ENCODE measurements at regions of chr20 and their contacts with region 1.

Region 1: DNA sequence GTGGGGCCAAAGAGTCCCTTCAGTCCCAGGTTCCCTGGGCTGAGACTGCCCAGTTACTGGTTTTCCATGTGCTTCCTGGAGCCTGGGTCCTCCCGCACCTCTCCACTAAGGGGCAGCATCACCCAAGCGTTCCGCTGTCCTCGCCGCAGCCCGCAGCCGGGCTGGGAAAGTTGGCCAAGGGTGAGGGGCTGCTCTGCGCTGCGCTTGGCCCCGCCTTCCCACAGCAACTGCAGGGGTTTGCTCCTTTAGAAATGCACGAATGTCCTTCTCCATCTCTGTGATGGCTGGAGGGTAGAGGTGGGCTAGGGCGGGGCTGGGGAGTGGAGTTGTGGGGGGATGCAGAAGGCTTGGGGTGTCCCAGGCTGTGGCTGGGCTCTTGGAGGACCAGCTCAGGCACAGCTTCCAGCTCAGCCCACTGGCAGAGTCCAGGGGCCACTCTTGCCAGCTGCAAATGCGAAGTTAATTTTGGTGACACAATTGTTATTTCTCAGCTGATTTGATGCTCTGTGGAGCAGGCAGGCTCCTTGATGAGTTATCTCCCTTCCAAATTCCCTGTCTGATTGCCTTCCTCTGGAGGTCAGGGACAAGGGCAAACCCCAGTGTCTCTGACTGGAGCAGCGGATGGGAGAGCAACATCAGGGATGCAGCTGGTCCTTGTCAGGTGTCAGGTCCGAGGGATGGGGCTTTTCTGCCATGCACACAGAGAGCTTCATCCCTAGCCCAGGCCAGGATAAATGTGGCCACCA is 63.2 kb downstream of the NOL4L start:
- DNase-seq: peak; percentile 85
- H3K4me3 ChIP-seq: peak overlapping the region in 1 of 2 experiments; percentile 58; a peak in 1 of 4 replicates
- H3K27ac ChIP-seq: peak overlapping the region in 1 of 2 experiments; percentile 96; a peak in 2 of 4 replicates
- H3K4me1 ChIP-seq: peaks cover 0 to 77% of the 10 kb centered on the region in 2 experiments; a peak in 3 of 4 replicates
- H3K27me3 ChIP-seq: no peaks in the 10 kb centered on the region
- CTCF ChIP-seq: peak; percentile 84
- EP300 ChIP-seq: no peak
- RAD21 ChIP-seq: peak; percentile 98

Region 2: DNA sequence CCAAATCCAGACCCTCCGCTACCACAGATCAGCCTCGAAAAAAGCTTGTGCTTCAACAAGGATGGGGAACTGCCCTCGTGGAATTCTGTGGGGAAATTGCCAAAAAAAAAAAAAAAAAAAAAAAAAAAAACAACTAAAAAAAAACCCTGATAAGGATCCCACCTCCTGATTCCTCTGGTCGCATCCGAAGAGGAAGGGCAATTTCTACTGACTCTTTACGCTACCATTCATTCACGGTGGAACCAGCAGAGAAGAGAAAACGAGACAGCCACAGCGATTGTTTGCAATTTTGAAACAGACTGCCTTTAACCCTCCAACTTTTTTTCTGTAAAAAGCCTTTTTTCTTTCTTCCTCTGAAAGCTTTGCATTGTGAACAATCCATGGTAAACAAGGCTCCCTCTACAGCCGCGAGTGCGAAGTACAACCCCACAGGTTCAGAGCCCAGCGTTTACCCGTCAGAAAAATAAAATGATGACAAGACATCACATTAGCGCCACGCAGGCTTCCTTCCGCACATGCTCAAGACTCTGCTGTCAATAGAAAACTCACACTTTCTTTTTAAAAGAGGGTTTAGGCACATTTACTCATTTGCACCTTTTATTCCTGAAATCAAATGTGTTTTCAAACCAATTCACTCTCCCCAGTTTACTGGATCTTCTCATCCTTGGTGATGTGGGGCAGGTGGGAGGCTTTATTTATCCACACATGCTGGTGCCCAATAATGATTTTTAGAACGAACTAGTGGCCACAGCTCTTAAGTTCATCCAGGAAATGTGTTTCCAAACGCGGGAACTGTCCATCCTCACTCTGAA is 36.8 kb before region 1 on chr20:
- CTCF ChIA-PET with region 1: interaction called, 28 read pairs
- POLR2A ChIA-PET with region 1: interaction called, 6 read pairs
- DNase-seq: peak; percentile 61
- H3K4me3 ChIP-seq: peak overlapping the region; percentile 53 to 61
- H3K27ac ChIP-seq: peak overlapping the region; percentile 87 to 100
- H3K4me1 ChIP-seq: peaks cover 0 to 33% of the 10 kb centered on the region in 2 experiments; a peak in 2 of 4 replicates
- H3K27me3 ChIP-seq: no peaks in the 10 kb centered on the region
- CTCF ChIP-seq: peak; percentile 79
- EP300 ChIP-seq: no peak
- RAD21 ChIP-seq: peak; percentile 72

Region 3: DNA sequence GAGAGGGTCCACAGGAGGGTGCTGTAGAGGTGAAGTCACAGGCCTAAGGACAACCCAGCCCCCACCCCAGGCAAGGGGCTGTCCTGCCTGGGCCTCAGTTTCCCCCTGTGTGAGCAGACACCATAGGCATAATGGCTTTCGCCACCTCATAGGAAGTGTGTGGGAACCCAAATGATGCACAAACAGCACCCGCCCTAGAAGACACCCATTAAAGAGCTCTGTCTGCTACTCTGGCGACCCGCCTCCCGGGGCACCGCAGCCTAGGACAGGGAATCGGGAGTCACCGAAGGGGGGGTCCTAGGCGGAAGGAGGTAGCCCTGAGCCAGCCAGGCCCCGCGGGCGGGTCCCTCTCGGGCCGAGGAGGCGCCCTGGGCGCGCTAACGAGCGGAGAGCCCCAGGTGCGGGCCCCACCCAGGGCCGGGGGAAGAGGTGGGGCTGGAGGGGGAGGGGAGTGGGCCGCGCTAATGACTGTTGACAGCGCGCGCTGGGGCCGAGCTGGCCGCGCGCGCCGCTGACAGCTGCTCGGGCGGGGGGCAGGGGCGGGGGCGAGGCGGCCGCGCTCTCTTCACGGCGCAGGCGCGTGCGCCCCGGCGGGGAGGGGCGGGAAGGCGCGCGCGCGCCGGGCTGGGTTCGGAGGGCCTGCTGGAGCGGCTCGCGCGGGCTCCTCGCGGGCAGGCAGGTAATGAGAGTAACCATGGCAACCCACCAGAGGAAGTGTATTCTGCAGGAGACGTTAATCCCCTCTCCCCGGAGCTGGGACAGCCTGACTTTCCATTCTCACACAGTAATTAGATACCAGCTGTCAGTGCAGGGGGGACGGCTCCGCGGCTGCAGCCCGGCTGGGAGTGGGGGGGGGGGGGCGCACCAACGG is 14.2 kb after region 1 on chr20:
- CTCF ChIA-PET with region 1: interaction called, 30 read pairs
- POLR2A ChIA-PET with region 1: interaction called, 6 read pairs
- DNase-seq: peak; percentile 96
- H3K4me3 ChIP-seq: peak overlapping the region; percentile 23 to 49; a peak in 2 of 4 replicates
- H3K27ac ChIP-seq: no peak overlapping the region; a peak in 1 of 4 replicates
- H3K4me1 ChIP-seq: peaks cover 0 to 48% of the 10 kb centered on the region in 2 experiments; a peak in 1 of 4 replicates
- H3K27me3 ChIP-seq: no peaks in the 10 kb centered on the region; the same call in 1 of the 2 replicates
- CTCF ChIP-seq: no peak
- EP300 ChIP-seq: no peak
- RAD21 ChIP-seq: no peak

Region 4: GRCh38 chr20:32574296-32575226 is 52.6 kb after region 1 on chr20:
- CTCF ChIA-PET with region 1: interaction called, 29 read pairs
- POLR2A ChIA-PET with region 1: no interaction called
- DNase-seq: no peak
- H3K4me3 ChIP-seq: no peak overlapping the region
- H3K27ac ChIP-seq: peak overlapping the region in 1 of 2 experiments; percentile 37; a peak in 1 of 4 replicates
- H3K4me1 ChIP-seq: peaks cover 0 to 2% of the 10 kb centered on the region in 2 experiments; a peak in 1 of 4 replicates
- H3K27me3 ChIP-seq: no peaks in the 10 kb centered on the region
- CTCF ChIP-seq: no peak
- EP300 ChIP-seq: no peak
- RAD21 ChIP-seq: no peak

Region 5: DNA sequence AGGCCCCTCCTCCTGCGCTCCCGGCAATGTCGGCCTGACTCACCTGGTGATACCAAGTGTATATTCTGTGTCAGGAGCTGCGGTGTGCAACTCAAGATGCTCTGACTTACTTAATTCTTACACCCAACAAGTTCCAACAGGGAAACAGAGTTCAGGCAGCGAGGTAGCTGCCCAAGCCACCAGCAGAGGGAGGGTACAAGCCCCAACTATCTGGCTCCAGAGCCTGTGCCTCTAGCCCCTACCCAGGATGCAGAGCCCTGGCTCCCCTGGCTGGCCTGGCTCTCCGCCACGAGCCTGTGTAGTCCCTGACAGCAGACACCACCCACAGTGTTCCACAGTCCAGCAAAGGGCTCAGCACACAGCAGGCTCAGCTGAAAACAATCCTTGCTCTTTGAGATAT is 116.9 kb after region 1 on chr20:
- CTCF ChIA-PET with region 1: interaction called, 326 read pairs
- POLR2A ChIA-PET with region 1: no interaction called
- DNase-seq: peak; percentile 81
- H3K4me3 ChIP-seq: no peak overlapping the region
- H3K27ac ChIP-seq: peak overlapping the region in 1 of 2 experiments; percentile 35; a peak in 1 of 4 replicates
- H3K4me1 ChIP-seq: peaks cover 0 to 26% of the 10 kb centered on the region in 2 experiments; a peak in 1 of 4 replicates
- H3K27me3 ChIP-seq: 0 out of 2 replicates have a peak, but pooled peaks cover 17% of the 10 kb centered on the region
- CTCF ChIP-seq: no peak
- EP300 ChIP-seq: no peak
- RAD21 ChIP-seq: no peak

Region 6: DNA sequence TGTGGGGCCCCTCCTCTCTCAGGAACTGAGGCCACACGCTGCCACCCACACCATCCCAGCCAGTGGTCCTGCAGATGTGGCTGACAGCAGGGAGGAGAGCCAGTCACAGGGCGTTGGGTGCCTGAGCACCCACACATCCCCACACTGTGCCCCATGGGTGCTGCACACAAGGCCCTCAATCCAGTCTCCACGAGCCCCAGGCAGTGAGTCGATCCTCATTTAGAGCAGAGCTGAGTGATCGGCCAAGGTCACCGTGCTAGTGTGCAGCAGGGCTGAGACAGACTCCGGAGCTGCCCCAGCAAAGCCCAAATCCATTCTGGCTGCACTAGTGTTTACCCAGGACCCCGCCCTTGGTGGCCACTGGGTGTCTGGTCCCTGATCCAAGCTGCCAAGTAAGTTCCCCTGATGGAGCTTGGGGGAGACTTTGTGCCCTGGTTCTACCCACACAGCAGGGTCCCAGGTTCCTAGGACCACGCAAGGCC is 142.8 kb after region 1 on chr20:
- CTCF ChIA-PET with region 1: interaction called, 12 read pairs
- POLR2A ChIA-PET with region 1: no interaction called
- DNase-seq: no peak
- H3K4me3 ChIP-seq: no peak overlapping the region
- H3K27ac ChIP-seq: no peak overlapping the region
- H3K4me1 ChIP-seq: no peaks in the 10 kb centered on the region; a peak in 1 of 4 replicates
- H3K27me3 ChIP-seq: no peaks in the 10 kb centered on the region
- CTCF ChIP-seq: no peak
- EP300 ChIP-seq: no peak
- RAD21 ChIP-seq: no peak

Region 7: GRCh38 chr20:34215711-34216381 is 1693.9 kb after region 1 on chr20:
- CTCF ChIA-PET with region 1: no interaction called
- POLR2A ChIA-PET with region 1: no interaction called
- DNase-seq: peak; percentile 84
- H3K4me3 ChIP-seq: peak overlapping the region; percentile 54 to 60
- H3K27ac ChIP-seq: peak overlapping the region; percentile 6 to 65
- H3K4me1 ChIP-seq: peaks cover 0 to 3% of the 10 kb centered on the region in 2 experiments; a peak in 3 of 4 replicates
- H3K27me3 ChIP-seq: no peaks in the 10 kb centered on the region
- CTCF ChIP-seq: no peak
- EP300 ChIP-seq: no peak
- RAD21 ChIP-seq: no peak